ENCODE measurements at regions of chr14 and their contacts with region 1.

Region 1: GRCh38 chr14:59126710-59127432 is 61.6 kb upstream of the DAAM1 start:
- DNase-seq: peak in 1 of 3 donors; percentile 33
- ATAC-seq: peak; percentile 83
- H3K4me3 ChIP-seq: no peak overlapping the region
- H3K4me1 ChIP-seq: no peaks in the 10 kb centered on the region
- CTCF ChIP-seq: peak; percentile 39

Region 2: DNA sequence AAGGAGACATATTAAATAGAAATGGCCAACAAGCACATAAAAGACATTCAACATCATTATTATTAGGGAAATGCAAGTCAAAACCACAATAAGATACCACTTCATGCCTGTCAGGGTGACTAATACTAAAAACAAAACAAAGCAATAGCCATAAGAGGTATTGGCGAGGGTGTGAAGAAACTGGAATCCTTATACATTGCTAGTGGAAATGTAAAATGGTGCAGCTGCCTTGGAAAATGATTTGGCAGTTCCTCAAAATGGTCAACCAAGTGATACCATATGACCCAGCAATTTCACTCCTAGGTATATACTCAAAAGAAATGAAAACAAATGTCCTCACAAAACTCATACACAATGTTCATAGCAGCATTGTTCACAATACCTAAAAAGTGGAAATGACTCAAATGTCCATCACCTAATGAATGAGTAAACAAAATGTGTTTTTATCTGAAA is 311.4 kb after region 1 on chr14:
- intact Hi-C with region 1: loop called in 1 of 2 experiments (anchors 5 kb)
- DNase-seq: no peak
- ATAC-seq: no peak
- H3K4me3 ChIP-seq: no peak overlapping the region
- H3K4me1 ChIP-seq: no peaks in the 10 kb centered on the region
- CTCF ChIP-seq: no peak

Measured in mucosa of descending colon (tissue), 3 donors.